Right cardiac atrium (tissue), 5 donors: ENCODE measurements at regions of chr11 and their contacts with region 1.

Region 1: GRCh38 chr11:24196733-24197132 is 300.1 kb upstream of the LUZP2 start:
- DNase-seq: no peak
- ATAC-seq: no peak
- H3K4me3 ChIP-seq: no peak overlapping the region
- H3K27ac ChIP-seq: no peak overlapping the region
- H3K4me1 ChIP-seq: no peaks in the 10 kb centered on the region
- H3K27me3 ChIP-seq: no peaks in the 10 kb centered on the region

Region 2: DNA sequence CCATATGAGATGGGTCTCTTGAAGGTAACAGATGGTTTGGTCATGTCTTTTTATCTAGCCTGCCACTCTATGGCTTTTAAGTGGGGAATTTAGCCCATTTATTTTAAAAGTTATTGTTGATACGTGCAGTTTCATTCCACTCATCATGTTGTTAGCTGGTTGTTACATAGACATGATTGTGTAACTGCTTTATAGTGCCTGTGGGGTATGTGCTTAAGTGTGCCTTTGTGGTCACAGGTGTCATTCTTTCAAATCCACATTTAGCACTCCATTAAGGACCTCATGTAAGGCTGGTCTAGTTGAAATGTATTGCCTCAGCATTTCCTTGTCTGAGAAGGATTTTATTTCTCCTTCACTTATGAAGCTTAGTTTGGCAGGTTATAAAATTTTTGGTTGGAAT is 36.3 kb after region 1 on chr11:
- intact Hi-C with region 1: loop called in 1 of 4 experiments (anchors 2 kb)
- DNase-seq: no peak
- ATAC-seq: no peak
- H3K4me3 ChIP-seq: no peak overlapping the region
- H3K27ac ChIP-seq: no peak overlapping the region
- H3K4me1 ChIP-seq: peaks cover 2% of the 10 kb centered on the region
- H3K27me3 ChIP-seq: no peaks in the 10 kb centered on the region